IMR-90 (cell line): ENCODE measurements at regions of chr3 and their contacts with region 1.

Region 1: DNA sequence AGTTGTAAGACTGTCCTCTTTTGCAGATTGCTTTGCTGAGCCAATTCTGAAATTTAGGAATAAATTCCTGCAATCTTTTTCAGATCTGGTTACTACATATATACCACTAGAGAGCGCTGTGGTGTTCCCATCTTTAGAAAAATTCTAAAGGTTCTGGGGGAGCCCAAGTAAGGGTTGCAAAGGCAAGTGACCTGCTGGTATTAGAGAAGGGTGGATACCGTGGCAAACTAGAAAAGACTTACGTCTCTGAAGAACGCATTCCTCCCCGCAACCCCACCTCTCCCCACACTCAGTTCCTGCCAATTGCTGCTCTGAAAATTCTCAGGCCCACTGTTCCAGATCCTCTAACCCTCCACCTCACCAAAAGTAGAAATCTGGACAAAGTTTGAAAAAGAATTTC is 48.5 kb downstream of the EFHB start:
- DNase-seq: peak; percentile 41
- ATAC-seq: no peak
- H3K4me3 ChIP-seq: no peak overlapping the region
- H3K27ac ChIP-seq: no peak overlapping the region
- H3K4me1 ChIP-seq: peaks cover 10% of the 10 kb centered on the region
- H3K27me3 ChIP-seq: no peaks in the 10 kb centered on the region
- CTCF ChIP-seq: peak; percentile 62
- POLR2A ChIP-seq: no peak
- RAD21 ChIP-seq: peak; percentile 58

Region 2: GRCh38 chr3:19711160-19711782 is 174.2 kb before region 1 on chr3:
- CTCF ChIA-PET with region 1: no interaction called
- POLR2A ChIA-PET with region 1: no interaction called
- dilution Hi-C with region 1: no loop called
- in situ Hi-C with region 1: no loop called
- intact Hi-C with region 1: no loop called
- DNase-seq: no peak
- ATAC-seq: no peak
- H3K4me3 ChIP-seq: no peak overlapping the region
- H3K27ac ChIP-seq: no peak overlapping the region
- H3K4me1 ChIP-seq: no peaks in the 10 kb centered on the region
- H3K27me3 ChIP-seq: no peaks in the 10 kb centered on the region
- CTCF ChIP-seq: no peak
- POLR2A ChIP-seq: no peak
- RAD21 ChIP-seq: no peak

Region 3: GRCh38 chr3:19946832-19947548 is 61.5 kb after region 1 on chr3 and contains the start of gene RAB5A:
- CTCF ChIA-PET with region 1: no interaction called
- POLR2A ChIA-PET with region 1: no interaction called
- dilution Hi-C with region 1: no loop called
- in situ Hi-C with region 1: loop called (anchors 5 kb)
- intact Hi-C with region 1: loop called (anchors 1 kb)
- DNase-seq: peak; percentile 98
- ATAC-seq: peak; percentile 91
- H3K4me3 ChIP-seq: peak within 1 kb of the TSS; percentile 95
- H3K27ac ChIP-seq: peak within 1 kb of the TSS; percentile 88
- H3K4me1 ChIP-seq: peaks cover 6% of the 10 kb centered on the region; the same call in 1 of the 2 replicates
- H3K27me3 ChIP-seq: no peaks in the 10 kb centered on the region
- CTCF ChIP-seq: no peak
- POLR2A ChIP-seq: peak; percentile 87
- RAD21 ChIP-seq: no peak
- total RNA-seq, gene RAB5A: 46.4 and 82.8 TPM in 2 replicates

Region 4: GRCh38 chr3:19994796-19995195 is 109.3 kb after region 1 on chr3:
- CTCF ChIA-PET with region 1: no interaction called
- POLR2A ChIA-PET with region 1: no interaction called
- dilution Hi-C with region 1: no loop called
- in situ Hi-C with region 1: no loop called
- intact Hi-C with region 1: loop called (anchors 5 kb)
- DNase-seq: peak; percentile 10
- ATAC-seq: peak; percentile 32; the same call in 1 of the 2 replicates
- H3K4me3 ChIP-seq: no peak overlapping the region
- H3K27ac ChIP-seq: no peak overlapping the region
- H3K4me1 ChIP-seq: no peaks in the 10 kb centered on the region
- H3K27me3 ChIP-seq: no peaks in the 10 kb centered on the region
- CTCF ChIP-seq: no peak
- POLR2A ChIP-seq: no peak
- RAD21 ChIP-seq: no peak

Region 5: DNA sequence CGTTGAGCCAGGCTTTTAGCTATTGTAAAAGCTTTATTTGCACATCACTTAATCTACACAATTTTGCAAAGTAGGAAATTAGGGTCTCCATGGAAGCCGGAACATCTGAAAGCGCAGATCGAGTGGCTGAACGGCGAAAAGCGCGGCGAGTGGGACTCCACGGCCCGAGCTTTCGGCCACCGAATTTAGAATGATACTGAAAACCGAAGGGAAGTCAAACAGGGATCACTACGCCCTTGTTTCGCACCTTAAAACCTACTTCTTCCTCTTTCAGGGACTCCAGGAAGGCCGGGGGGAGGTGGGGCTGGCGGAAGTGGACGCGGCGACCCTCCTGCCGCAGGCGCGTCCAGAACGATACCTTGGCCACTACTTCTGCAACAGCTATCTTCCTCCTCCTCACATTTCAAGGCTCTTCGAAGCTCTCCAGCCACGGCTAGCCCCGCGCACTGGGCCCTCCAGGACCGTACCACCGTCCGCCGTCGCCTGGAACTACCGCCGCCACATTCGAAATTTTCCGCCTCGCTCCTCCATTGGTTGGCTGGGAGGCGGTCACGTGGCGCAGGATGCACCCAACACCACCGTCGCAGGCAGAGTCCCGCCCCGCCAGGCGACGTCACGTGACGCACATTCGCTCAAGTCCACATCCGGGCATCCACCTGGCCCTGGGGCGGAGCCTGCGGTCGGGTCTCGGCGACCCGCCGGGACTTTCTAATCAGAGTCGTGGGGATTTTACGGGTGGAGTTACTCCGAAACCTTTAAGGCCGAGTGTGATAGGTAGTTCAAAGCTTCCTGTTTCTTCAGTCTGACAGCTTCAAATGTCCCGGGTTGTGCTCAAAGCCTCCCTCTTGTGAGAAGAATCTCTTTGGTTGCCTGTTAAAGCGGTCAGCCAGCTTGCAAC is 300.5 kb after region 1 on chr3 and contains the start of gene SGO1:
- CTCF ChIA-PET with region 1: no interaction called
- POLR2A ChIA-PET with region 1: no interaction called
- dilution Hi-C with region 1: no loop called
- in situ Hi-C with region 1: no loop called
- intact Hi-C with region 1: loop called (anchors 1 kb)
- DNase-seq: peak; percentile 96
- ATAC-seq: peak; percentile 96
- H3K4me3 ChIP-seq: peak within 1 kb of the TSS; percentile 89
- H3K27ac ChIP-seq: peak within 1 kb of the TSS; percentile 93
- H3K4me1 ChIP-seq: no peaks in the 10 kb centered on the region
- H3K27me3 ChIP-seq: no peaks in the 10 kb centered on the region
- CTCF ChIP-seq: no peak
- POLR2A ChIP-seq: peak; percentile 90
- RAD21 ChIP-seq: no peak
- total RNA-seq, gene SGO1: 5.2 and 8.1 TPM in 2 replicates

Region 6: GRCh38 chr3:21059404-21059803 is 1173.9 kb after region 1 on chr3:
- CTCF ChIA-PET with region 1: no interaction called
- POLR2A ChIA-PET with region 1: no interaction called
- dilution Hi-C with region 1: no loop called
- in situ Hi-C with region 1: no loop called
- intact Hi-C with region 1: no loop called
- DNase-seq: no peak
- ATAC-seq: no peak
- H3K4me3 ChIP-seq: no peak overlapping the region
- H3K27ac ChIP-seq: no peak overlapping the region
- H3K4me1 ChIP-seq: no peaks in the 10 kb centered on the region
- H3K27me3 ChIP-seq: no peaks in the 10 kb centered on the region
- CTCF ChIP-seq: no peak
- POLR2A ChIP-seq: no peak
- RAD21 ChIP-seq: no peak